ENCODE measurements at regions of chr20 and their contacts with region 1.

Region 1: DNA sequence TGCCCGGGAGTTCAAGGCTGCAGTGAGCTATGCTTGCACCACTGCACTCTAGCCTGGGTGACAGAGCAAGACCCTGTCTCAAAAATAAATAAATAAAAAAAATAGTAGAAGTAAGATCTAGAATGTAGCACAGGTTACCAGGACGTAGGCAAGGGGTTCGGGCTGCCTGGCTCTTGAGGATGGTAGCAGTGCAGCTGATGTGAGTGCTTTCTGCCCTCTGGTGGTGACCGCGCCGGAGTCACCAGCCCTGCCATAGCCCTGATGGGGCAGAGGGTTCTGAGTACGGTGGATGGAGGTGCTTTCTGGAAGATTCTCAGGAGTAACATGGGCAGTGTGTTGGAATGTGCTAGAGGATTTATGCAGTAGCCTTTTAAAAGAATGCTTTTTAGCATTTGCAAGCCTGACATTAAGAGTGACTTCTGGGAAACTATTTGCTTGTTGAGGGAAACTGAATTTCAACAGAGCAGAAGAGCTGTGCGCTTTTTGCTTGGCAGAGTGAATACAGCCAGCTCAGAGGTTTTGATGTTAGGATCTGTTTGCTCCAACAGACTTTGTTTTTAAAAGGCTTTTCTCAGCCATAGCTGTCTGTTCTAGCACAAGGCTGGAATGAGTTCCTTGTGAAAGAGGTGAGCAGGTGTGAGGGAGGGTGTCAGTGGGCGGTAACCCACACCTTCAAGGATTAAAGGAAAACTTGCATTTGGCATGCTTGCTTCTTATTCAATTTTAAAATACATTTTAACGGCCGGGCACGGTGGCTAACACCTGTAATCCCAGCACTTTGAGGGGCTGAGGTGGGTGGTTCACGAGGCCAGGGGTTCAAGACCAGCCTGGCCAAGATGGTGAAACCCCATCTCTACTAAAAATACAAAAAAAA is 65.9 kb downstream of the PTPN1 start:
- DNase-seq: peak; percentile 79 to 88
- H3K4me3 ChIP-seq: no peak overlapping the region
- H3K4me3 Mint-ChIP-seq: no peak overlapping the region
- H3K27ac Mint-ChIP-seq: no peak overlapping the region
- H3K4me1 ChIP-seq: no peaks in the 10 kb centered on the region
- H3K4me1 Mint-ChIP-seq: peaks cover 7% of the 10 kb centered on the region
- H3K27me3 ChIP-seq: no peaks in the 10 kb centered on the region
- H3K27me3 Mint-ChIP-seq: no peaks in the 10 kb centered on the region
- CTCF ChIP-seq: peak; percentile 97 to 99

Region 2: GRCh38 chr20:50467718-50468356 is 108.2 kb before region 1 on chr20:
- CTCF ChIA-PET with region 1: interaction called, 4 read pairs
- POLR2A ChIA-PET with region 1: no interaction called
- intact Hi-C with region 1: loop called (anchors 2 kb)
- DNase-seq: peak; percentile 79 to 86
- H3K4me3 ChIP-seq: no peak overlapping the region
- H3K4me3 Mint-ChIP-seq: no peak overlapping the region
- H3K27ac Mint-ChIP-seq: no peak overlapping the region
- H3K4me1 ChIP-seq: peaks cover 3% of the 10 kb centered on the region
- H3K4me1 Mint-ChIP-seq: peaks cover 5% of the 10 kb centered on the region
- H3K27me3 ChIP-seq: no peaks in the 10 kb centered on the region
- H3K27me3 Mint-ChIP-seq: no peaks in the 10 kb centered on the region
- CTCF ChIP-seq: no peak

Region 3: DNA sequence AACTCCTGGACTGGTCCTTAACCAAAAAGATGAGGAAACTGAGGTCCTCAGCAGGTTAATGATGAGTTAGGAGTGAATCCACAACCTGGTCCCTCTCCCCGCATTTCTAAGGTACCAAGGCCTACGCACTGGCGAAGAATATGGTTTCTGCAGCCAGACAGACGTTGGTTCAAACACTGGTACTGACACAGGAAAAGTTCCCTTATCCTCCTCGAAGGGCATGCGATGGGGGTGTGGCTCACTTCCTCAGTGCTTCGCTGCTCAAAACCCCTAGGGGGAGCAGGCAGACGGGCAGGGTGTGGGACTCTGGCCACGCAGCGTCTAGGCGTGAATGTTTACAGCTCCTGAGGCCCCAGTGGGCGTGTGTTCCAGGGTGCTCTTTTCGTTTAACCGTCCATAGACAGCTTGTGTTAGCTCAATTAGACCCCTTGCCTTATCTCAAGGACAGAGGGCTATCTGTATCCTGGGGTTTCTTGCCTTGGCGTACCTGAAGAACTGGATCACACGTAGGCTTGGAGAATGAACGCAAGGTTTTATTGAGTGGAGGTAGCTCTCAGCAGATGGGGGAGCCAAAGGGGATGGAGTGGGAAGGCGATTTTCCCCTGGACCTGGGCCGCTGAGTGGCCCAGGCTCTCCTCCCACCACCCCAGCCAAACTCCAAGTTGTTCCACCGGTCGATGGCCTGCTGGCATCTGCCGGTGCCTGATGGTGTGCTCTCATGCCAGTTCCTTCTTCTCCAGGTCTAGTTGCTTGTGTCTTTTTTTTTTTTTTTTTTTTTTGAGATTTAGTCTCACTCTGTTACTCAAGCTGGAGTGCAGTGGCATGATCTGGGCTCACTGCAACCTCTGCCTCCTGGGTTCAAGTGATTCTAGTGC is 97.7 kb before region 1 on chr20:
- CTCF ChIA-PET with region 1: interaction called, 20 read pairs
- POLR2A ChIA-PET with region 1: no interaction called
- intact Hi-C with region 1: loop called (anchors 1 kb)
- DNase-seq: peak; percentile 91 to 92
- H3K4me3 ChIP-seq: no peak overlapping the region
- H3K4me3 Mint-ChIP-seq: no peak overlapping the region
- H3K27ac Mint-ChIP-seq: no peak overlapping the region
- H3K4me1 ChIP-seq: peaks cover 14% of the 10 kb centered on the region
- H3K4me1 Mint-ChIP-seq: peaks cover 7% of the 10 kb centered on the region
- H3K27me3 ChIP-seq: no peaks in the 10 kb centered on the region
- H3K27me3 Mint-ChIP-seq: no peaks in the 10 kb centered on the region
- CTCF ChIP-seq: peak; percentile 92 to 97

Region 4: GRCh38 chr20:50504231-50504823 is 71.8 kb before region 1 on chr20:
- CTCF ChIA-PET with region 1: interaction called, 37 read pairs
- POLR2A ChIA-PET with region 1: no interaction called
- intact Hi-C with region 1: loop called (anchors 1 kb)
- DNase-seq: no peak
- H3K4me3 ChIP-seq: no peak overlapping the region
- H3K4me3 Mint-ChIP-seq: no peak overlapping the region
- H3K27ac Mint-ChIP-seq: no peak overlapping the region
- H3K4me1 ChIP-seq: peaks cover 10% of the 10 kb centered on the region
- H3K4me1 Mint-ChIP-seq: no peaks in the 10 kb centered on the region
- H3K27me3 ChIP-seq: no peaks in the 10 kb centered on the region
- H3K27me3 Mint-ChIP-seq: no peaks in the 10 kb centered on the region
- CTCF ChIP-seq: peak; percentile 43 to 53

Region 5: DNA sequence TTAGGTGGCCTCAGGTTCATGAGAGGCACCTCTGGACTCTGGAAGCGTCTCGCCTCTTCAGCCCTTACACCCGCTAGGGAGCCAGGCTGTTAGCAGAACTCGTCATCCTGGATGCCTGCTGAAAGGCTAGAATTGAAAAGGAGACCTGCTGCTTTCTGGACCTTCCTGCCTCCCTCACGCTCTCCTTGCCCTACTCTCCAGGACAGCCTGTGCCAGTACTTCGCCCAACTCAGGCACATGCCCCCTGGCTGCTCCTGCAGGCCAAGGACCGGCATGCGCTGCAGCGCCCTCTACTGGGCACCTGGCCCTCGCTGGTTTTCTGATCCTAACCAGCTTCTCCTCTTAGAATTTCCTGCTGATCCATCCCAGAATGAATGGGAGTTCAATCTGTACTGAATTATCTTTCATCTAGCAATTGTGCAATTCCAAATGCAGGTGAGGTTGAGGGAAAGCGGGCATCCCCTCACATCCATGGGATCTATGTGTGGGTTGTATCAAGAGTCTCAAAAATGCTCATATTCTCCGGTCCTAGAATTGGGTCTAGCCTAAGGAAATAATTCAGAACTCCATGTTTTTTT is 12.0 kb after region 1 on chr20:
- CTCF ChIA-PET with region 1: interaction called, 10 read pairs
- POLR2A ChIA-PET with region 1: no interaction called
- intact Hi-C with region 1: no loop called
- DNase-seq: peak; percentile 87 to 94
- H3K4me3 ChIP-seq: no peak overlapping the region
- H3K4me3 Mint-ChIP-seq: no peak overlapping the region
- H3K27ac Mint-ChIP-seq: no peak overlapping the region
- H3K4me1 ChIP-seq: peaks cover 9% of the 10 kb centered on the region; the same call in 1 of the 2 replicates
- H3K4me1 Mint-ChIP-seq: no peaks in the 10 kb centered on the region
- H3K27me3 ChIP-seq: no peaks in the 10 kb centered on the region
- H3K27me3 Mint-ChIP-seq: no peaks in the 10 kb centered on the region
- CTCF ChIP-seq: peak; percentile 99 to 100

Measured in Caco-2 (cell line).